ENCODE measurements at regions of chr5 and their contacts with region 1.

Region 1: DNA sequence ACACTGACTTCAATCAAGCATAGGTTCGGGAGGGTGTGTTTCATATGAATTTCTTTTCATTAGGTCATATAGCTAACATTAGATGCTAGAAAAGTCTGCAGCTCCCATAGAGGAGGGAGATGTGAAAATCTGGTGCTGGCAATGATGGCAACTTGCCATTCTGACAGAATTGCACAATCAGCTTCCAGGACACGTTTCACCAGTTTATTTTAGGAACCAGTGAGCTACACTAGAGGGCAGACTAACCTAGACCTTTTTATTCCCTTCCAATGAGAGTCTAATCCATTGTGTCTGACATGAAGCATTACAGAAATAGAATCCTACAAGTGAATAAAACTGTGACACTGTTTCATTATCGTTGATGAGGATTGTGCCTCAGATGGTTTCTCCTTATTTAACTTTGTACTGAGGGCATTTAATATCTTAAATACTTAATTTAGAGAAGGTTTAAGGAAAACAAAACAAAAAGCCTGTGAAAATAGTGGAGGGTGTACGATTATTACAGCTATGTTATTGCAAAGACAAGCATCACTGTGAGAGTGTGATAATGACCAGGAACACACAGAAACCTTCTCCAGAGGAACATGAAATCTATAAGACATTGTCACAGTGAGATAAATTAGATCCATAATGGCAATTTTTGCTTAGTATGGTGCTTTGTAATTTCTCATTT is 363.3 kb upstream of the RPS23 start:
- DNase-seq: peak; percentile 27 to 51 (median 40)
- ATAC-seq: peak; percentile 83
- H3K4me3 ChIP-seq: no peak overlapping the region
- H3K27ac ChIP-seq: no peak overlapping the region
- H3K4me1 ChIP-seq: no peaks in the 10 kb centered on the region
- H3K27me3 ChIP-seq: no peaks in the 10 kb centered on the region
- CTCF ChIP-seq: peak; percentile 43 to 75 (median 64); a peak in 5 of 6 replicates
- EP300 ChIP-seq: no peak
- POLR2A ChIP-seq: no peak
- RAD21 ChIP-seq: peak; percentile 78 to 80

Region 2: GRCh38 chr5:81336556-81336955 is 1304.9 kb before region 1 on chr5:
- CTCF ChIA-PET with region 1: no interaction called
- POLR2A ChIA-PET with region 1: no interaction called
- in situ Hi-C with region 1: no loop called
- intact Hi-C with region 1: no loop called
- DNase-seq: no peak
- ATAC-seq: no peak
- H3K4me3 ChIP-seq: no peak overlapping the region
- H3K27ac ChIP-seq: no peak overlapping the region
- H3K4me1 ChIP-seq: no peaks in the 10 kb centered on the region; a peak in 2 of 5 replicates
- H3K27me3 ChIP-seq: peaks cover 2 to 6% of the 10 kb centered on the region in 2 experiments; a peak in 3 of 5 replicates
- CTCF ChIP-seq: no peak
- EP300 ChIP-seq: no peak
- POLR2A ChIP-seq: no peak
- RAD21 ChIP-seq: no peak

Region 3: DNA sequence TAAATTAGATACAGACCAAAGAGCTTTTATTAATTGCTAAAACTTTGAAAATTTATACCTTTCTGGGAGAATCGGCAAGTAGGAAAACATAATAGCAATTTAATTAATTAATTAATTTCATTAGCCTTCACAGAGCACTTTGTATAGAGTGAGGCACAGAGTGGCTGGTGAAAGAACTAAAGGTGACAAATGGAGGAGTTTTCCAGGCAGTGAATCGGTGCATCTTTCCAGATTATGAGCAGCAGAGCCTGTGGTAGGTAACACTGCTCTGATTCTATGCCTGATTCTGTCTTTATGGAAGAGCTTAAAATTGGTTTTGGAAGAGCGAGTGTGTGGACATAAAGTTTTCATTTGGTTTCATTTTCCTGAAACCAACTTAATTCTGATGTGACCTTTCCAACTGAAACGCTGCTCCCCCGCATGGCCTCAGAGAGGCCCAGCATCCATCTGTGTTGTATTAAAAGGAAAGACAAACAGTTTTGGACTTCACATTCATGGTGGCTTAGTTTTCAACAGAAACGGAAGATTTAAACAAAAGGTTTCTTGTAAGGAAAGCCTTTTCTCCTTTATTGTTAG is 174.4 kb before region 1 on chr5:
- CTCF ChIA-PET with region 1: no interaction called
- POLR2A ChIA-PET with region 1: no interaction called
- in situ Hi-C with region 1: no loop called
- intact Hi-C with region 1: no loop called
- DNase-seq: peak in 2 of 4 experiments; percentile 18 to 61
- ATAC-seq: peak; percentile 78
- H3K4me3 ChIP-seq: no peak overlapping the region
- H3K27ac ChIP-seq: peak overlapping the region; percentile 69; the same call in 1 of the 3 replicates
- H3K4me1 ChIP-seq: peaks cover 0 to 7% of the 10 kb centered on the region in 2 experiments; a peak in 1 of 5 replicates
- H3K27me3 ChIP-seq: no peaks in the 10 kb centered on the region
- CTCF ChIP-seq: peak; percentile 25 to 40 (median 36); a peak in 3 of 6 replicates
- EP300 ChIP-seq: 0 out of 2 replicates have a peak, but pooled peaks have one; percentile 17
- POLR2A ChIP-seq: no peak
- RAD21 ChIP-seq: peak; percentile 16 to 50; a peak in 2 of 4 replicates

Region 4: GRCh38 chr5:82549263-82549662 is 92.2 kb before region 1 on chr5:
- CTCF ChIA-PET with region 1: no interaction called
- POLR2A ChIA-PET with region 1: no interaction called
- in situ Hi-C with region 1: no loop called
- intact Hi-C with region 1: no loop called
- DNase-seq: no peak
- ATAC-seq: no peak
- H3K4me3 ChIP-seq: no peak overlapping the region
- H3K27ac ChIP-seq: no peak overlapping the region
- H3K4me1 ChIP-seq: no peaks in the 10 kb centered on the region
- H3K27me3 ChIP-seq: no peaks in the 10 kb centered on the region
- CTCF ChIP-seq: no peak
- EP300 ChIP-seq: no peak
- POLR2A ChIP-seq: no peak
- RAD21 ChIP-seq: no peak

Region 5: DNA sequence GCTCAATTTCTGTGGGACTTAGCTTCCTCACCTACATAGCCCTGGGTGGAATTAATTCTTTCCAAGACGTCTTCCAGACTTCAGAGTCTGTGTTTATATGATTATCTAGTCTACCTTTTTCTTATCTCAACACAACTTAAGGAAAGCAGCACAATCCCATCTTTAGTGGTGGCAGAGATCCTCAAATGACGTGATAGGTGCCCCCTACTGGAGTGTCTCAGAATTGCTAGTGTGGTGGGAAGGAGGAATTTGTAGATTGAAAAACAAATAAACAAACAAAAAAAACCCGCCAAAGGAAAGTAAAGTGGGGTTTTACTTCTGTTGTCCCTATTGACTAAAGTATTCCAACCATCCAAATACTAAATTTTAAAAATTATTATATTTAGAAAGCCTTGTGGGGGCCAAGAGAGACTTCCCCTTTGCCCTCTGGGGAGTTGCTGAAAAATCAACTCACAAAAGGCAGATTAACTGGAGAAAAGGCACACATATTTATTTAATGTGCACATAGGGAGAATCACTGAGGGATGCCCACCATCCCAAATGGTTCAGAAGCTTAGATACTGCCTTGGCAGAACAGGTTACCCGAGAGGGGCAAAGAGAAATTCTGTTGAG is 152.4 kb after region 1 on chr5:
- CTCF ChIA-PET with region 1: no interaction called
- POLR2A ChIA-PET with region 1: no interaction called
- in situ Hi-C with region 1: no loop called
- intact Hi-C with region 1: loop called (anchors 10 kb)
- DNase-seq: peak; percentile 39 to 52 (median 46)
- ATAC-seq: peak; percentile 63; the same call in 1 of the 3 replicates
- H3K4me3 ChIP-seq: no peak overlapping the region
- H3K27ac ChIP-seq: no peak overlapping the region
- H3K4me1 ChIP-seq: peaks cover 0 to 3% of the 10 kb centered on the region in 2 experiments; a peak in 1 of 5 replicates
- H3K27me3 ChIP-seq: no peaks in the 10 kb centered on the region
- CTCF ChIP-seq: peak; percentile 51 to 68 (median 62); a peak in 5 of 6 replicates
- EP300 ChIP-seq: no peak
- POLR2A ChIP-seq: no peak
- RAD21 ChIP-seq: peak in 1 of 2 experiments; percentile 54; a peak in 2 of 4 replicates

Region 6: DNA sequence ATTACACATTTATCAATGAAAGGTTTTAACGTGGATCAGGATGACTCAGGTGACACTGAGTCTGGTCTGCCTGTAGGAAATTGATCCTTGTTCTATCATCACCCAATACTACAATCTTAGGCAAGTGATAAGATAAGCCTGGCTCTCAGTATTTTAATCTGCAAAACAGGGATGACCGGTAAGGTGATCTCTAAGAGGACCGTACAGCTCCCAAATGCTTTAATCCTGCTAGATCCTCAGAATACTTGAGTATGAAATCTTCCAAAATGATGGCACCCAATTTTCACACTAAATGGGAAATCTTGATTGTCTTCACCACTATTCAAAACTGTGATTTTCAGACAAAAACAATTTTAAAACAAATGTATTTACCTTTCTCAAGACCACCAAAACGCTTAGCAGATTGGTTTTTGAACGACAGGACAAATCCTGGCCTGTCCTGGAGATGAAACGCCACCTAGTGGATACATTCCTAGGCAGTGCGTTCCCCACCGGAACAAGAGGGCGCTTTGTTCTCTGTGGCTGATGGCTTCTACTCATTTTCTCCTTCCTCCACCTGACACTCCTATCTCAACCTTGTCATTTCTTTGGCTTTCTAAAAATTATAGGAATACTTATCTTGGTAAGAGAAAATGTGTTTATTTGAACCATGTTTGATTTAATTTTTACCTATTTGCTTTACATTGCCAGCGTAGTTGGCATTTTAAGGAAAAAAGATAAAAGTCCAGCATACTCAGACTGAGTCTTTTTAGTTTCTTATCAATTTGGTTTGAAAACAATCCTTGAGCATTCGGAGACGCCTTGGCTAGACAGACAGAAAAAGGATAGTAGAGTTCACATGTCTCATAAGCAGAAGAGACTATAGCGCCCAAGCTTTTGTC is 788.9 kb after region 1 on chr5:
- CTCF ChIA-PET with region 1: no interaction called
- POLR2A ChIA-PET with region 1: no interaction called
- in situ Hi-C with region 1: no loop called
- intact Hi-C with region 1: loop called (anchors 5 kb)
- DNase-seq: peak; percentile 48 to 79 (median 54)
- ATAC-seq: peak; percentile 99
- H3K4me3 ChIP-seq: no peak overlapping the region
- H3K27ac ChIP-seq: no peak overlapping the region
- H3K4me1 ChIP-seq: no peaks in the 10 kb centered on the region
- H3K27me3 ChIP-seq: no peaks in the 10 kb centered on the region; a peak in 1 of 5 replicates
- CTCF ChIP-seq: peak; percentile 87 to 98 (median 97)
- EP300 ChIP-seq: no peak
- POLR2A ChIP-seq: no peak
- RAD21 ChIP-seq: peak; percentile 73 to 92

Region 7: GRCh38 chr5:83473346-83474163 is 832.1 kb after region 1 on chr5:
- CTCF ChIA-PET with region 1: no interaction called
- POLR2A ChIA-PET with region 1: no interaction called
- in situ Hi-C with region 1: no loop called
- intact Hi-C with region 1: loop called (anchors 5 kb)
- DNase-seq: peak; percentile 64 to 77 (median 70)
- ATAC-seq: peak; percentile 85
- H3K4me3 ChIP-seq: peak overlapping the region; percentile 40
- H3K27ac ChIP-seq: peak overlapping the region; percentile 53; the same call in 1 of the 3 replicates
- H3K4me1 ChIP-seq: peaks cover 5 to 36% of the 10 kb centered on the region in 2 experiments; a peak in 3 of 5 replicates
- H3K27me3 ChIP-seq: peaks cover 11 to 25% of the 10 kb centered on the region in 2 experiments; a peak in 4 of 5 replicates
- CTCF ChIP-seq: peak; percentile 73 to 87 (median 76)
- EP300 ChIP-seq: no peak
- POLR2A ChIP-seq: no peak
- RAD21 ChIP-seq: peak; percentile 71 to 78

Region 8: DNA sequence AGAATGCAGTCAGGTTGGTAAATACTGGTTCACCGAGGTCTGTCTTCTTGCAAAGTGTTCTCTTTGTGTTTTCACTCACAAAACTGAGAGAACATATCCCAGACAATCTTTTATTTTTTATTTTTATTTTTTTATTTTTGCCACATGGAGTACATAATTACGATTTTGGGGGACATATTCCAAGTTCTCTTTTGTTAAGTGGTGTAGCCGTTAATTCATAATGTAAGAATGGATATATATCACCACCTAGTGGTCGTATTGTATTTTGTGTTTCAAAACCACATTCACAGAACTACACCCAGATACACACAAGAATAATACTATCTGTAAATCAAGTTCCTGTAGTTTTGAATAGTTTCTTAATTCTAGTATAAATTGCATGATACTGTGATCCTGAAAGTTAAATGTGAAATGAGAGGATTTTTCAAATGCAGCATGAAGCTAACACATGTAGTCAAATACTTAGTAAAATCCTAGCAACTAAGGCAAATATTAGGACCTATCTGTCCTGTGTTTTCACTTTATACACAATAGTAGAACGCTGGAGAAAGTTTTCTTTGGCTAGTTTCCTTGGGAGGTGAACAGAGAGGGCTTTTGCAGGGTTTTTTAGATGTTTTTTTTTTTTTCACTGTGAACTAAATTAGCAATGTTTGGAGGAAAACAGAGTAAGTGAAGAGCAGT is 922.7 kb after region 1 on chr5:
- CTCF ChIA-PET with region 1: no interaction called
- POLR2A ChIA-PET with region 1: no interaction called
- in situ Hi-C with region 1: no loop called
- intact Hi-C with region 1: loop called (anchors 2 kb)
- DNase-seq: peak; percentile 35 to 49 (median 43)
- ATAC-seq: peak; percentile 82
- H3K4me3 ChIP-seq: no peak overlapping the region
- H3K27ac ChIP-seq: no peak overlapping the region
- H3K4me1 ChIP-seq: no peaks in the 10 kb centered on the region
- H3K27me3 ChIP-seq: no peaks in the 10 kb centered on the region; a peak in 1 of 5 replicates
- CTCF ChIP-seq: peak in 2 of 3 experiments; percentile 29 to 68; a peak in 3 of 6 replicates
- EP300 ChIP-seq: no peak
- POLR2A ChIP-seq: no peak
- RAD21 ChIP-seq: peak; percentile 84 to 86

Measured in K562 (cell line).